PC-3 (cell line): ENCODE measurements at regions of chr4 and their contacts with region 1.

Region 1: GRCh38 chr4:55358668-55359067 is 12.6 kb downstream of the SRD5A3 start:
- DNase-seq: peak; percentile 83
- ATAC-seq: peak; percentile 72
- H3K4me3 ChIP-seq: peak overlapping the region; percentile 15; the same call in 1 of the 2 replicates
- H3K27ac ChIP-seq: peak overlapping the region; percentile 77
- H3K4me1 ChIP-seq: peaks cover 51% of the 10 kb centered on the region
- H3K27me3 ChIP-seq: no peaks in the 10 kb centered on the region
- CTCF ChIP-seq: no peak

Region 2: GRCh38 chr4:55055529-55055928 is 303.1 kb before region 1 on chr4:
- CTCF ChIA-PET with region 1: no interaction called
- POLR2A ChIA-PET with region 1: no interaction called
- intact Hi-C with region 1: no loop called
- DNase-seq: no peak
- ATAC-seq: no peak
- H3K4me3 ChIP-seq: no peak overlapping the region
- H3K27ac ChIP-seq: no peak overlapping the region
- H3K4me1 ChIP-seq: no peaks in the 10 kb centered on the region
- H3K27me3 ChIP-seq: peaks cover 5% of the 10 kb centered on the region; the same call in 1 of the 2 replicates
- CTCF ChIP-seq: no peak

Region 3: DNA sequence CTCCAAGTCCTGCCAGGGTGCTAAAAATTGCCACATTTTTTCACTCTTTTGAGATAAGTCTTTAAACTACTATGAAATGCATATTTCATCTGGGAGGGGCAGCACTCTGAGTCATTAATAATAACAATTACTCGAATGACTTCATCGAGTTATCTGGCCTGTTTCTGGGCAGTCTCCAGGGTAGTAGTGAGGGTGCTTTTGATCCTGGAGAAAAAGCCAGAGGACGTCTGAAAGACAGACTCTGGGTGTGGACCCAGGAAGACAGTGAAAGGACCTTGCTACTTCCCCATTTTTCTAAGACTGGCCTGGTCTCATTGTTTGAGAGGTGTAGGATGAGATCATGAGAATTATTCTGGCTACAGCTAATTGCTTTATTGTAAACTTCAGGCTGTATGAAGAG is 54.9 kb before region 1 on chr4:
- CTCF ChIA-PET with region 1: no interaction called
- POLR2A ChIA-PET with region 1: no interaction called
- intact Hi-C with region 1: no loop called
- DNase-seq: peak; percentile 87
- ATAC-seq: peak; percentile 98
- H3K4me3 ChIP-seq: no peak overlapping the region
- H3K27ac ChIP-seq: peak overlapping the region; percentile 30
- H3K4me1 ChIP-seq: peaks cover 16% of the 10 kb centered on the region
- H3K27me3 ChIP-seq: no peaks in the 10 kb centered on the region
- CTCF ChIP-seq: no peak

Region 4: DNA sequence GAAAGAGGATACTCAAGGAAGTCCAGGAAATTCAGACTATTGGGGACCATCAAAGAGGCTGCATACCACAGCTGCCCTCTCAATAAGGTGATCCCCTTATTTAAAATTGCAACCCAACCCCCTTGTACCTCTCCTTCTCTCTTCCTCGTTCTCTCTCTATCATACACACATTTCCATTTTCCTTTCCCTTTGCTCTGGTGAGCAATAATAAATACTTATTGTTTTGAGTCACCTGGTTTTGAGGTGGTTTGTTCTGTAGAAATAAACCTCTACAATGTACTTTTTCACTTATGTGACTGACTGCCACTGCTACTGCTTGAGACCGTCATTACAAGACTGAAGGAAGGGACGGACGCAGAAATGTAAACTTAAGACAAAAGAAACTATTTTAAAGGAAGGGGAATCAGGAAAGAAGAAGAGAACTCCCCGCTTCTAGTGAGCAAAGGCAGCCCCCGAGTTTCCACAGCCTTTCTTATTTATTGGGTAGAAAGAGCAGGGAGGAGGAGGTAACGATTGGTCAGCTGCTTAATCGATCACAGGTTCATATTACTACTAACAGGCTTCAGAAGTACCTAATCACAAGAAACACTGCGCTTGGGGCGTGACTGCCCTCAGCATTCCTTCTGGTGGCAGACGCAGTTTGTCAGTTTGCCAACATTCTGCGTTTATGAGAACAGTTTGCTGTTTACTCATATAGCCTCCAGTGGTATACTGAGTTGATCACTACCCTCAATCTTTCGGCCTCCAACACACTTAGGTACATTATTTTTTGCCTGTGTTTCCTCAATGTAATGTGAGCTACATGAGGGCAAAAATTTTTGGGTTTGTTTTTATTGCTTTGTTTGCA is 20.2 kb after region 1 on chr4:
- CTCF ChIA-PET with region 1: interaction called, 6 read pairs
- POLR2A ChIA-PET with region 1: no interaction called
- intact Hi-C with region 1: loop called (anchors 1 kb)
- DNase-seq: peak; percentile 99
- ATAC-seq: peak; percentile 94
- H3K4me3 ChIP-seq: peak overlapping the region; percentile 55
- H3K27ac ChIP-seq: peak overlapping the region; percentile 83
- H3K4me1 ChIP-seq: peaks cover 20% of the 10 kb centered on the region
- H3K27me3 ChIP-seq: no peaks in the 10 kb centered on the region
- CTCF ChIP-seq: no peak